ENCODE measurements at regions of chrX and their contacts with region 1.

Region 1: DNA sequence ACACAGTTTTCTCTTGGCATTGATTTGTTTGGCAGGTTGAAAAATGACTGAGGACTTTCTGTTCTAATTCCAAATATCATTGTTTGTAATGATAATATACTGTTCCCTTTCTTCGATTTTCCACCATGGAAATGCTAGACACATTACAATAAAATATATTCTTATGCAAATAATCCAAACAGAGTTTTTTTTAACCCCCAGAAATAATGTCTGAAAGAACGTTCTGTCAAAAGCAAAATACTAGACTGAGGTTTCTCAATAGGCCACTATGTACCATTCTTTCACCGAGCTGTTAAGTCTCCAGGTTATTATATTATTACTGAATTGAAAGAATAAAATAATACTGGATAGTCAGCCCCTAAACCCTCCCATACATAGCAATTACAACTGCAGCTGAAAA is 312.5 kb downstream of the ZIC3 start:
- DNase-seq: no peak
- H3K4me3 ChIP-seq: no peak overlapping the region
- H3K27ac ChIP-seq: no peak overlapping the region
- H3K4me1 ChIP-seq: no peaks in the 10 kb centered on the region
- H3K27me3 ChIP-seq: no peaks in the 10 kb centered on the region
- CTCF ChIP-seq: no peak
- EP300 ChIP-seq: no peak
- POLR2A ChIP-seq: no peak

Region 2: GRCh38 chrX:137547291-137547690 is 331.1 kb before region 1 on chrX:
- intact Hi-C with region 1: no loop called
- DNase-seq: no peak
- H3K4me3 ChIP-seq: no peak overlapping the region
- H3K27ac ChIP-seq: no peak overlapping the region
- H3K4me1 ChIP-seq: no peaks in the 10 kb centered on the region
- H3K27me3 ChIP-seq: no peaks in the 10 kb centered on the region
- CTCF ChIP-seq: no peak
- EP300 ChIP-seq: no peak
- POLR2A ChIP-seq: no peak

Region 3: DNA sequence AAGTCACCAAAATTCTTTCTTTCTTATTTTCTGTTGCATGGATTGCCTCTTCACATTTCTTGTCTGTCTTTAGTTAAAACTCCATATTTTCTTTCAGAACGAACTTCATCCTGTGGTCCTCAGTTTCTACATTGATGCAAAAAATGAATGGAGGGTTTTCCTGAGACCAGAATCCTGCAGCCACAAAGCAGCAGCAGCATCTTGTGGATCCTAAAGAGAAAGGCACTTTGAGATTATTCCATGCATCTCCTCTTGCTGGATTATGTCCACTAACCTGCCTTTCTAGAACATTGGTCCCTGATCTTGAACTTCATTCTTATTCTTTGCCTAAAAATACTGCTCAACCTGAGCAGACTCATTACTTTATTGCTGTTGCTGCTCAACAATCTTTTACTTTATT is 119.0 kb after region 1 on chrX:
- intact Hi-C with region 1: loop called in 1 of 4 experiments (anchors 5 kb)
- DNase-seq: no peak
- H3K4me3 ChIP-seq: no peak overlapping the region
- H3K27ac ChIP-seq: no peak overlapping the region
- H3K4me1 ChIP-seq: no peaks in the 10 kb centered on the region
- H3K27me3 ChIP-seq: no peaks in the 10 kb centered on the region
- CTCF ChIP-seq: no peak
- EP300 ChIP-seq: no peak
- POLR2A ChIP-seq: no peak

Region 4: DNA sequence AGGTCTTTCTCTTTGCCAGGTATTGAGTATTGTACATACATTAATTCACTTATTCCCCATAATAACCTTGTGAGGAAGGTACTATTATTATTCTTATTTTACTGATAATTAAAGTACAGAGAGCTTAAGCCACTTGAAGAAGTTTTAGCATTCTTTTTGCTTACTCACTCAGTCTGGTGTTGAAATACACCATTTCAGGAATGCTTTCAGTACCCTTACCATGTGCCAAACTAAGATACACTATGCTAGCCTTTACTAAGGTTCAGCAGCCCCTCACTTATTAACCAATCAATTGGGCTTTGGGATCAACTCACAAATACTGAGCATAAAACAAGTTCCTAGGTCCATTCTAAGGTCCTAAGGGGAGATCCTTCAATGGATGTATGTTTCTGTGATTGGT is 1012.1 kb after region 1 on chrX:
- intact Hi-C with region 1: no loop called
- DNase-seq: no peak
- H3K4me3 ChIP-seq: no peak overlapping the region
- H3K27ac ChIP-seq: no peak overlapping the region
- H3K4me1 ChIP-seq: no peaks in the 10 kb centered on the region
- H3K27me3 ChIP-seq: no peaks in the 10 kb centered on the region
- CTCF ChIP-seq: no peak
- EP300 ChIP-seq: no peak
- POLR2A ChIP-seq: no peak

Measured in ovary (tissue), 10 donors.